Breast epithelium (tissue), 4 donors: ENCODE measurements at regions of chr2 and their contacts with region 1.

Region 1: GRCh38 chr2:29412197-29412925 is 297.1 kb downstream of the CLIP4 start:
- DNase-seq: no peak
- H3K4me3 ChIP-seq: no peak overlapping the region
- H3K27ac ChIP-seq: no peak overlapping the region
- H3K4me1 ChIP-seq: no peaks in the 10 kb centered on the region
- H3K27me3 ChIP-seq: no peaks in the 10 kb centered on the region
- CTCF ChIP-seq: no peak
- POLR2A ChIP-seq: no peak

Region 2: GRCh38 chr2:29022681-29023080 is 389.7 kb before region 1 on chr2:
- intact Hi-C with region 1: no loop called
- DNase-seq: no peak
- H3K4me3 ChIP-seq: no peak overlapping the region
- H3K27ac ChIP-seq: no peak overlapping the region
- H3K4me1 ChIP-seq: no peaks in the 10 kb centered on the region
- H3K27me3 ChIP-seq: no peaks in the 10 kb centered on the region
- CTCF ChIP-seq: no peak
- POLR2A ChIP-seq: no peak

Region 3: DNA sequence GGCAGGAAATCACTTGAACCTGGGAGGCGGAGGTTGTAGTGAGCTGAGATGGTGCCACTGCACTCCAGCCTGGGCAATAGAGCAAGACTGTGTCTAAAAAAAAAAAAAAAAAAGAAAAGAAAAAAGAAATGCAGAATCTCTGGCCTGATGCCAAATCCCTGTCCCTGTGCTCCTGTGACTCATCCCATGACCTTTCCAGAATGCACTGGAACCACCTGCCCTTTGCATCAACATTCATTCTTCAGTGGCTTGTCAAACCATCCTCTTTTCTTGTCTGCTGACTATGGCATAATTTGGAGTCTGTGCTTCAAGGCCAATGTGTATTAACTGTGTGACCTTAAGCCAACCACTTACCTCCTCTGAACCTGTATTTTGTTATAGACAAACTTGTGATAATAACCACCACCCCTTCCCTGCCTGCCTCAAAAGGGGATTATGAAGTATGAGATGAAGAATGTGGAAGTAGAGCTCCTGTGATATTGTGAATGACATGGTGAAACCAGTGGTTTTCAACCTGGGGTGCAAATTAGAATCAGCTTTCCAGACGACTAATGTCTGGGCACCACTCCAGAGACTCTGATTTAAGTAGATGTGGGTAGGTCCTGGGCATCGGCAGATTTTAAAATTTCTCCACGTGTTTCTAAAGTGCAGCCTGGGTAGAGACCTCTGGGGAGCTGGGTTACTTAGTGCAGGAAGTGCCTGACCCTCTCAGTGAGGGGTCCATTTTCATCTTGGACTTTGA is 107.8 kb before region 1 on chr2:
- intact Hi-C with region 1: loop called (anchors 5 kb)
- DNase-seq: no peak
- H3K4me3 ChIP-seq: no peak overlapping the region
- H3K27ac ChIP-seq: no peak overlapping the region
- H3K4me1 ChIP-seq: no peaks in the 10 kb centered on the region
- H3K27me3 ChIP-seq: no peaks in the 10 kb centered on the region
- CTCF ChIP-seq: no peak
- POLR2A ChIP-seq: no peak